ENCODE measurements at regions of chr2 and their contacts with region 1.

Region 1: GRCh38 chr2:213862407-213863076 is 548.3 kb upstream of the VWC2L start:
- DNase-seq: no peak
- H3K4me3 ChIP-seq: no peak overlapping the region
- H3K27ac ChIP-seq: no peak overlapping the region
- H3K4me1 ChIP-seq: no peaks in the 10 kb centered on the region
- H3K27me3 ChIP-seq: no peaks in the 10 kb centered on the region
- CTCF ChIP-seq: no peak

Region 2: GRCh38 chr2:213920014-213920413 is 57.5 kb after region 1 on chr2:
- CTCF ChIA-PET with region 1: no interaction called
- POLR2A ChIA-PET with region 1: interaction called, 13 read pairs
- intact Hi-C with region 1: no loop called
- DNase-seq: no peak
- H3K4me3 ChIP-seq: no peak overlapping the region
- H3K27ac ChIP-seq: no peak overlapping the region
- H3K4me1 ChIP-seq: no peaks in the 10 kb centered on the region
- H3K27me3 ChIP-seq: no peaks in the 10 kb centered on the region
- CTCF ChIP-seq: no peak

Region 3: DNA sequence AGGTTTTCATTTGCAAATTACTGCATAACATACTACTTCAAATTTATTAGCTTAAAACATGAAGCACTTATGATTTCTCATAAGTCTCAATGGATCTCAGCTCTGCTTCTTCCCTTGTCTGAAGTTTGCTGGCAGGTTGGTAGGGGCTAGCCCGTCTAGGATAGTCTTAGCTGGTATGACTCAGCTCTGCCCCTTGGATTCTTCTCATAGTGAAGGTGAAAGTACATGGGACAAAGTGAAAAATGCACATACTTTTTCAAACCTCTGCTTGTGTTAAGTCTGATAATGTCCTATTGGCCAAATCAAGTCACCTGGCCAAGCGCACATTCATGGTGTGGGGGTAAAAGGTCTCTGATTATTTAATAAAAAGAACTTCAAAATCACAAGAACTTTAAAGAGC is 363.5 kb after region 1 on chr2:
- CTCF ChIA-PET with region 1: no interaction called
- POLR2A ChIA-PET with region 1: no interaction called
- intact Hi-C with region 1: loop called (anchors 10 kb)
- DNase-seq: no peak
- H3K4me3 ChIP-seq: no peak overlapping the region
- H3K27ac ChIP-seq: no peak overlapping the region
- H3K4me1 ChIP-seq: no peaks in the 10 kb centered on the region
- H3K27me3 ChIP-seq: no peaks in the 10 kb centered on the region
- CTCF ChIP-seq: no peak